Activated B cell treated with CpG ODN at 0.5 μM for 24 hours (primary cell): ENCODE measurements at regions of chr1 and their contacts with region 1.

Region 1: DNA sequence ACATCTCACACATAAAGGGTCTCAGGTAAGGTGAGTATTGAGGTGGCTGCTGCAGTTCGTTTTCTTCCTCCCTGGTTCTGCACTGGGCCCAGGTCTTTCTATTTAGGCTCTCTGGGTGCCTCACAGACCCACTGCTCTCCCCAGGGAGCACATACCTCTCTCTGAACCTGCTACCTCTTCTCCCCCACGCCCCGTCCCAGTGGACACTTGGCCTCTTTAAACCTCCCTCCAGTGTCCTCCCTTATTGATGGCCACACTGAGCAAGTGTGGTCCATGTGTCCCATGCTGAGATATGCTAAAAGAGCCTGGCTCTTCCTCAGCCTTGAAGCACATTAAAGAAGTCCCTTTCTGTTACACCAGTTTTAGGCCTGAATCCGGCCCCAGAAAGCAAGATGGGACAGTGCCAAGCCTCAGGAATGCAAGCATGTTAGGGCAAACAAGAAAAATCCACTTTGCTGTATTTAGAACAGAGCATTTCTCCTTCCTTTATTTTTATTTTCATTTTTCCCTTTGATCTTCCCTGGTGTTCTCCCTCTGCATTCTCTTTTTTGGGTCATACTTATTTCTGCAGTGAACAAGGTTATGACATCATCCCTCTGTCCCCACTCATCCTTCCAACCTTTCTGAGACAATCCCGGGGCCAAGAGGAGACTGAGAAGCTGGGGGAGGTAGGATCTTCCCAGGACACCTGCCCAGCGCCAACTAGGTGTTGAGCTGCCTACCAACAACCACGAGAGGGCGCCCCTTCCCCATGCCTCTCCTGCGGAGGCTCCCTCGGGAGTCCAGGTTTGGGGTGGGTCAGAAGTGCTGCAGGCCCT is 5.0 kb upstream of the CHI3L2 start:
- DNase-seq: peak; percentile 75
- ATAC-seq: peak; percentile 49
- H3K4me3 Mint-ChIP-seq: peak overlapping the region; percentile 50
- H3K27ac Mint-ChIP-seq: peak overlapping the region; percentile 95
- H3K4me1 Mint-ChIP-seq: peaks cover 87% of the 10 kb centered on the region
- H3K27me3 Mint-ChIP-seq: no peaks in the 10 kb centered on the region
- CTCF ChIP-seq: peak; percentile 80

Region 2: GRCh38 chr1:110674337-110675059 is 548.0 kb before region 1 on chr1 and contains the start of gene KCNA3:
- CTCF ChIA-PET with region 1: no interaction called
- POLR2A ChIA-PET with region 1: no interaction called
- intact Hi-C with region 1: loop called (anchors 5 kb)
- DNase-seq: peak; percentile 68
- ATAC-seq: peak; percentile 62
- H3K4me3 Mint-ChIP-seq: peak within 1 kb of the TSS; percentile 90
- H3K27ac Mint-ChIP-seq: peak within 1 kb of the TSS; percentile 80
- H3K4me1 Mint-ChIP-seq: peaks cover 60% of the 10 kb centered on the region
- H3K27me3 Mint-ChIP-seq: no peaks in the 10 kb centered on the region
- CTCF ChIP-seq: no peak
- total RNA-seq, gene KCNA3: 15.0 and 20.0 TPM in 2 replicates

Region 3: GRCh38 chr1:111030590-111030989 is 191.9 kb before region 1 on chr1:
- CTCF ChIA-PET with region 1: interaction called, 21 read pairs
- POLR2A ChIA-PET with region 1: no interaction called
- intact Hi-C with region 1: loop called (anchors 1 kb)
- DNase-seq: no peak
- ATAC-seq: peak; percentile 70
- H3K4me3 Mint-ChIP-seq: no peak overlapping the region
- H3K27ac Mint-ChIP-seq: no peak overlapping the region
- H3K4me1 Mint-ChIP-seq: peaks cover 8% of the 10 kb centered on the region
- H3K27me3 Mint-ChIP-seq: no peaks in the 10 kb centered on the region
- CTCF ChIP-seq: peak; percentile 53

Region 4: GRCh38 chr1:111082421-111083192 is 139.9 kb before region 1 on chr1:
- CTCF ChIA-PET with region 1: no interaction called
- POLR2A ChIA-PET with region 1: no interaction called
- intact Hi-C with region 1: no loop called
- DNase-seq: no peak
- ATAC-seq: peak; percentile 75
- H3K4me3 Mint-ChIP-seq: peak overlapping the region; percentile 21
- H3K27ac Mint-ChIP-seq: peak overlapping the region; percentile 68
- H3K4me1 Mint-ChIP-seq: peaks cover 26% of the 10 kb centered on the region
- H3K27me3 Mint-ChIP-seq: no peaks in the 10 kb centered on the region
- CTCF ChIP-seq: no peak

Region 5: DNA sequence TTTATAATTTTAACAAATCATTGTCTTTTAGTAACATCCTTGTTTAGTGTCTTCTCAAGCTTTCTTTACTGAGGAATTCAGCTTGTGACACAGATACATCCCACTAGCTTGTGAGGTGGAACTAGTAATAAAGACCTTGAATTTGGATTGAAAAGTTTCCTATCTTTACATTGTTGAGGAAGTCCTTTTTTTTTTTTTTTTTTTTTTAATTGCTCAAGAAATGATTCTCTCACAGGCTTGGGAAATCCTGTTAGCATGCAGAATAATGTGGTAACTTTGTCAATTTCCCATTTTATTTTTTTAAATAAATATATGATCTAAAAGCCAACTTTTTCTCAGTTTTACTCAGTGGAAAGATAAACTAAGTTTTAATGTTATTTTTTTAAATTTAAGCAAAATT is 37.9 kb before region 1 on chr1:
- CTCF ChIA-PET with region 1: interaction called, 5 read pairs
- POLR2A ChIA-PET with region 1: interaction called, 3 read pairs
- intact Hi-C with region 1: loop called (anchors 5 kb)
- DNase-seq: no peak
- ATAC-seq: no peak
- H3K4me3 Mint-ChIP-seq: no peak overlapping the region
- H3K27ac Mint-ChIP-seq: no peak overlapping the region
- H3K4me1 Mint-ChIP-seq: peaks cover 43% of the 10 kb centered on the region
- H3K27me3 Mint-ChIP-seq: no peaks in the 10 kb centered on the region
- CTCF ChIP-seq: no peak

Region 6: DNA sequence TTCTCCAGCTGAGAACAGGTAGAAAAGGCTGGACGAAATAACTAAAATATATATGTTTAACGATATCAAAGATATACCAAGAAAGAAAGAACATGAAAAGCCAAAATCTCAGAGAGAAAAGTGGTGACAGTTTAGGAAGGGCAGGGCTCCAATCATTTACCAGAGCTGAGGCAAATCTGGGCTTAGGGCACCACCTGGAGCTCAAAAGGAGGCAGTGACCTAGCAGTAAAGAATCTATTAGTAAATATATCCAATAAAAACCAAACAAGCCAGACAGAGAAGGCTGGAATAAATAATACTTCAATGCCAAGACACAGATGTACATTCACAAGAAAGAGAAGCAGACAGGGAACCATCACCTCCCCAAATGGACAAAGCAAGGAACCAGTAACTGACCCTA is 111.7 kb after region 1 on chr1:
- CTCF ChIA-PET with region 1: interaction called, 17 read pairs
- POLR2A ChIA-PET with region 1: no interaction called
- intact Hi-C with region 1: loop called (anchors 1 kb)
- DNase-seq: no peak
- ATAC-seq: peak; percentile 61
- H3K4me3 Mint-ChIP-seq: no peak overlapping the region
- H3K27ac Mint-ChIP-seq: no peak overlapping the region
- H3K4me1 Mint-ChIP-seq: peaks cover 2% of the 10 kb centered on the region
- H3K27me3 Mint-ChIP-seq: no peaks in the 10 kb centered on the region
- CTCF ChIP-seq: no peak

Region 7: GRCh38 chr1:111448918-111449702 is 226.6 kb after region 1 on chr1 and contains the starts of genes ATP5PB and WDR77:
- CTCF ChIA-PET with region 1: no interaction called
- POLR2A ChIA-PET with region 1: interaction called, 4 read pairs
- intact Hi-C with region 1: loop called (anchors 2 kb)
- DNase-seq: peak; percentile 77
- ATAC-seq: peak; percentile 96
- H3K4me3 Mint-ChIP-seq: peak within 1 kb of the TSS; percentile 100
- H3K27ac Mint-ChIP-seq: peak within 1 kb of the TSS; percentile 98
- H3K4me1 Mint-ChIP-seq: peaks cover 71% of the 10 kb centered on the region
- H3K27me3 Mint-ChIP-seq: no peaks in the 10 kb centered on the region
- CTCF ChIP-seq: no peak
- total RNA-seq, gene ATP5PB: 220 and 229 TPM in 2 replicates
- total RNA-seq, gene WDR77: 55.8 and 63.3 TPM in 2 replicates

Region 8: GRCh38 chr1:111619635-111620440 is 397.3 kb after region 1 on chr1 and contains the start of gene RAP1A:
- CTCF ChIA-PET with region 1: no interaction called
- POLR2A ChIA-PET with region 1: no interaction called
- intact Hi-C with region 1: loop called (anchors 5 kb)
- DNase-seq: peak; percentile 88
- ATAC-seq: peak; percentile 77
- H3K4me3 Mint-ChIP-seq: peak within 1 kb of the TSS; percentile 95
- H3K27ac Mint-ChIP-seq: peak within 1 kb of the TSS; percentile 93
- H3K4me1 Mint-ChIP-seq: peaks cover 82% of the 10 kb centered on the region
- H3K27me3 Mint-ChIP-seq: no peaks in the 10 kb centered on the region
- CTCF ChIP-seq: no peak
- total RNA-seq, gene RAP1A: 92.4 and 93.8 TPM in 2 replicates